Activated T-helper 1 cell treated with anti-CD3 and anti-CD28 coated beads, Interleukin-12 subunit alpha, Interleukin-12 subunit beta, Interleukin-2, Interleukin-4 antibody, amounts not matched to agents 30 ng/mL and 10 ng/mL and 1 ng/mL, durations not matched to agents 14 hours and 24 hours and 36 hours (primary cell): ENCODE measurements at regions of chr3 and their contacts with region 1.

Region 1: DNA sequence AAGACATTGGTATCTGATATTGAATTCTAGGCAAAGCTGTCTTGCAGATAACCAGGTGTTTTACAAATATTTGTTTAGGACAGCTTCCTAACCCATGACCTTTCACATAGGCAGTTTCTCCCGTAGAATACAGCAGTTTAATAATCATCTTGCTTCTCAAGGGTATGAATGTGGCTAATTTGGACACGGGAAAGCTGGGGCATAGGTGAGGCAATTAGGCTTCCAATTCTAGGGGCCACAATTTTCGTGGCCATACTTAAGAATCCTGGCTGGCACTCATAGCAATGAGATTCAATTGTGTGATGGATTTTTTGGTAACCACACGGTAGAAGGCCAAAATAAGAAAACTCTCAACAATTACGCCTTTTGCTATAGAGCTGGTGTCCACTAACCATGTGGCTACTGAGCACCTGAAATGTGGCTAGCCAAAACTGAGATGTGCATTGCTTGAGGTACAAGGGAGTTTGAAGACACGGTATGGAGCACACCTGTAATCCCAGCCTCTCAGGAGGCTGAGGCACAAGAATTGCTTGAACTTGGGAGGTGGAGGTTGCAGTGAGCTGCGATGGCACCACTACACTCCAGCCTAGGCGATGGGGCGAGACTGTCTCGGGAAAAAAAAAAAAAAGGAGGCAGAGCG is 34.4 kb downstream of the TFRC start:
- DNase-seq: no peak
- H3K4me3 Mint-ChIP-seq: no peak overlapping the region
- H3K27ac Mint-ChIP-seq: peak overlapping the region; percentile 52
- H3K4me1 Mint-ChIP-seq: peaks cover 20% of the 10 kb centered on the region
- H3K27me3 Mint-ChIP-seq: no peaks in the 10 kb centered on the region

Region 2: GRCh38 chr3:196063971-196064370 is 16.5 kb after region 1 on chr3:
- intact Hi-C with region 1: loop called (anchors 2 kb)
- DNase-seq: no peak
- H3K4me3 Mint-ChIP-seq: no peak overlapping the region
- H3K27ac Mint-ChIP-seq: peak overlapping the region; percentile 45
- H3K4me1 Mint-ChIP-seq: peaks cover 36% of the 10 kb centered on the region
- H3K27me3 Mint-ChIP-seq: no peaks in the 10 kb centered on the region

Region 3: DNA sequence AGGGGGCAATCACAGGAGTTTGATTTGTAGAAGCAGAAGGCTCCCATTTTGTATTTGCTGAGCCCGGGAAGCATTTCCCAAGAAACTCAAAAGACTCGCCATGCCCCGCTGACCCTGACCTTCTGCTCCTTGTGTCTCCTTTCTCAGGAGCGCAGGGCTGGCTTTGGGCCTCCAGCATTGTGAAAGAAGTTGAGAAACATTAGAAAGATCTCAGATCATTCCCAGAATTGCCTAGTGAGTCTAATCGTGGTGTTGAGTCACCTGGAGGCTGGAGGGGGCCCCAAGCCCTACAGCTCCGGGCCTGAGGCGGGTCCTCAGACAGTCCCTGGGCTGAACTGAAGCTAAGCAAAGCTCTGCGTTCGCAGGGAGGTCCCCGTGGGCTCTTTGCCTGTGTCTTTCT is 932.0 kb after region 1 on chr3:
- intact Hi-C with region 1: no loop called
- DNase-seq: no peak
- H3K4me3 Mint-ChIP-seq: no peak overlapping the region
- H3K27ac Mint-ChIP-seq: no peak overlapping the region
- H3K4me1 Mint-ChIP-seq: peaks cover 4% of the 10 kb centered on the region
- H3K27me3 Mint-ChIP-seq: peaks cover 8% of the 10 kb centered on the region